PC-9 (cell line): ENCODE measurements at regions of chr4 and their contacts with region 1.

Region 1: DNA sequence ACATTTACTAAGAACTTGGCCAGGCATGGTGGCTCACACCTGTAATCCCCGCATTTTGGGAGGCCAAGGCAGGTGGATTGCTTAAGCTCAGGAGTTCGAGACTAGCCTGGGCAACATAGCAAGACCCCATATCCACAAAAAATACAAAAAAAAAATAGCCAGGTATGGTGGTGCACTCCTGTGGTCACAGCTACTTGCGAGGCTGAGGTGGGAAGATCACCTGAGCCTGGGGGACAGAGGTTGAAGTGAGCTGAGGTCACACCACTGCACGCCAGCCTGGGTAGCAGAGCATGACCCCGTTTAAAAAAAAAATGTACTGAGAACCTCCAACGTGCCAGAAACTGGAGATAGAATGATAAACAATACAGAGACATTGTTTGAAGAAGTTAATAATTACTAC is 8.0 kb downstream of the OPRPN start:
- DNase-seq: no peak
- H3K4me3 ChIP-seq: no peak overlapping the region
- H3K27ac ChIP-seq: no peak overlapping the region
- H3K4me1 ChIP-seq: no peaks in the 10 kb centered on the region
- H3K27me3 ChIP-seq: no peaks in the 10 kb centered on the region
- CTCF ChIP-seq: no peak

Region 2: GRCh38 chr4:69640289-69640688 is 765.5 kb before region 1 on chr4:
- CTCF ChIA-PET with region 1: no interaction called
- POLR2A ChIA-PET with region 1: interaction called, 10 read pairs
- intact Hi-C with region 1: no loop called
- DNase-seq: no peak
- H3K4me3 ChIP-seq: no peak overlapping the region
- H3K27ac ChIP-seq: no peak overlapping the region
- H3K4me1 ChIP-seq: no peaks in the 10 kb centered on the region
- H3K27me3 ChIP-seq: no peaks in the 10 kb centered on the region
- CTCF ChIP-seq: no peak

Region 3: DNA sequence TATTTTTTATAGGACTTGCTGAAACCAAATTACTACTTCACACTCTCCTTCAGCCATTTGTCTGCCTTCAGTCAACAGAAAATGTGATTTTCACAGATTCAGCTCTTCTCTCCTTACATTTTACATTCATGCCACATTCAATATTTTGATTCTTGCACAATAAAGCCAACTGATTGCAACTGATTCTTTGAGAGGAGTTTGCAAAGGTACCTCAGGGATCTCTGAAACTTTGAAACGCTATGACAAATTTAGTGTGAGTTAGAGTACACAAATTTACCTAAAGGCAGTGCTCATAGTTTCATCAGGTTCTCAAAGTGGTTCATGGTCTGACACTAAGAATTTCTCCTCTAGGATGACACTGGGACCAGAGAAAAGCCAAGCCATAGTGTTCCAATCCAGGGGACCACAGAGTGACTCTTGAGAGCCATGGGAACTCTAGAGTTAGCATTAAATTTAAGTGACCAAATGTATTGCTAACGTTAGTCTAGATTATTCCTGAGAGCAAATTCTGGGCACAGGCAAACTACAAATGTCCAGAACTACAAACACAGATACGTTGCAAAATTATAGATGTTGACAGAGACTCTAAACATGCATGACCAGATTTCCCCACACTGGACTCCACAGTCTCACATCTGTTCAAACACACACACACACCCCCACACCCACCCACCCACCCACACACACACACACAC is 154.4 kb before region 1 on chr4:
- CTCF ChIA-PET with region 1: no interaction called
- POLR2A ChIA-PET with region 1: no interaction called
- intact Hi-C with region 1: no loop called
- DNase-seq: no peak
- H3K4me3 ChIP-seq: no peak overlapping the region
- H3K27ac ChIP-seq: no peak overlapping the region
- H3K4me1 ChIP-seq: no peaks in the 10 kb centered on the region
- H3K27me3 ChIP-seq: no peaks in the 10 kb centered on the region
- CTCF ChIP-seq: no peak